Left cardiac atrium (tissue), 4 donors: ENCODE measurements at regions of chr9 and their contacts with region 1.

Region 1: DNA sequence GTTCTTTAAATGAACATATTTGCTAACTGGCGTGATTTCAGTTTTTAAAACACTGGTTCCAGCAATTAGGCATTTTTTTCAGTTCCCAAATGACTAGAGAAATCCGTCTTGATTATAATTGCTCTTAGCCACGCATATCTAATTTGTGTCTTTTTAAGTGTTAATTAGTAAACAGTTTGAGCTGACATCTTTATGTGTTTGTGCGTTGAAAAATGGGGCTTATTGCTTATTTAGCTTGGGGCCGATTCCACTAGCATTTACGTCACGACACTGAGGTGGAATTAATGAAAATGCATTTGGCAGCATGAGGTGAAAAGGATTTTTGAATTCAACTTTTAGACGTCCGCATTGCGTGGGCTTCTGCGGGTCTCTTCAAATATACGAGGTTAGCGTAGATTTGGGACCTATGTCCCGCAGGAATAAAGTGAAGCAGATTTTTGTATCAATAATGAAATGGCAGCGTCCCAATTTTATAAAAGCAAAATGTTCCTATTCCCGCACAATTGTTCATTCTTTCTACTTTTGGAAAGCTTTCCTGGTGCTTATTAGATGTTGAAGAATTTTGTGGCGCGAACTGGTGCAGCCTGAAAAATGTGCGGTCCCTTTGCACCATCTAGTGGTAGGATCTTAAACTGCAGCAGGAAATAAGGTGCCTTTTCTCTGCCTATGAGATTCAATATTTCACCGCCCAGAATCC is 122.7 kb upstream of the LMX1B start:
- DNase-seq: no peak
- ATAC-seq: peak; percentile 42 to 73

Region 2: DNA sequence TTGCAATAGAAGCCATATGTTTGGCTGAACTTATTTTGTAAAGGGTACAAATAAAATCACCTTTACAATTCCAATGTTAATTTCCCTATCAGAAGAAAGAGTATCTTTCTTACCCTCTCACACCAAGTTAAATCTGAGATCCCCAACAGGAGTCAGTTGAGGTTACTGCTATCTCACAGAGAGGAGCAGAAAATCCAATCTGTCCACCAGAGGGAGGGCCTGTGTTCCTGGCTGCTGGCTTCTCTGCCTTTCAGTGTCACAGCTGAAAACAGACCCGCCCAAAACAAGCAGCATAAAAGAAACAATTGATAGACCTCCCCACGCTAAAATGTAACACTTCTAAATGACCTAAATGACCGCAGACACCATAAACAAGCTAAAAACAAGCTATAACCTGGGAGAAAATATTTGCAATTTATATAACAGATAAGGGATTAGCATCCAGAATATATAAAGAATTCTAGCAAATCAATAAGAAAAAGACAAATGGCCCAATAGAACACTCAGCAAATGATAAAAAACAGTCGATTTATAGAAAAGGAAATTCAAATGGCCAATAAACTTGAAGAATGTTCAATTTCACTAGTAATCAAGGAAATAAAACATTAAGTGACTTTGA is 188.9 kb before region 1 on chr9:
- intact Hi-C with region 1: loop called (anchors 5 kb)
- DNase-seq: peak; percentile 55
- ATAC-seq: peak; percentile 68 to 75

Region 3: DNA sequence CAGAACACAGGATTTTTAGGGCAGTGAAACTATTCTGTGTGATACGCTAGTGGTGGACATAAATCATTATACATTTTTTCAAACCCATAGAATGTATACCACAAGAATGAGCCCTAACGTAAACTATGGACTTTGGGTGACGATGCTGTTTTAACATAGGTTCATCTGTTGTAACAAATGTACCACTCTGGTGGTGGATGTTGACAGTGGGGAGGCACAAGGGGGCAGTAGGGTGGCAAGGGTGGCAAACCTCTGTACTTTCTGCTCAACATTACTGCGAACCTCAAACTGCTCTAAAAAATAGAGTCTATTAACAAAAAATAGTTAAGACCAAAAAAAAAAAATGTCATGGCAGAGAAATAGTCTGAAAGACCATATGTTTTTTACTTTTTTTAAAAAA is 173.5 kb before region 1 on chr9:
- intact Hi-C with region 1: loop called in 1 of 2 experiments (anchors 5 kb)
- DNase-seq: no peak
- ATAC-seq: peak; percentile 27 to 43

Region 4: DNA sequence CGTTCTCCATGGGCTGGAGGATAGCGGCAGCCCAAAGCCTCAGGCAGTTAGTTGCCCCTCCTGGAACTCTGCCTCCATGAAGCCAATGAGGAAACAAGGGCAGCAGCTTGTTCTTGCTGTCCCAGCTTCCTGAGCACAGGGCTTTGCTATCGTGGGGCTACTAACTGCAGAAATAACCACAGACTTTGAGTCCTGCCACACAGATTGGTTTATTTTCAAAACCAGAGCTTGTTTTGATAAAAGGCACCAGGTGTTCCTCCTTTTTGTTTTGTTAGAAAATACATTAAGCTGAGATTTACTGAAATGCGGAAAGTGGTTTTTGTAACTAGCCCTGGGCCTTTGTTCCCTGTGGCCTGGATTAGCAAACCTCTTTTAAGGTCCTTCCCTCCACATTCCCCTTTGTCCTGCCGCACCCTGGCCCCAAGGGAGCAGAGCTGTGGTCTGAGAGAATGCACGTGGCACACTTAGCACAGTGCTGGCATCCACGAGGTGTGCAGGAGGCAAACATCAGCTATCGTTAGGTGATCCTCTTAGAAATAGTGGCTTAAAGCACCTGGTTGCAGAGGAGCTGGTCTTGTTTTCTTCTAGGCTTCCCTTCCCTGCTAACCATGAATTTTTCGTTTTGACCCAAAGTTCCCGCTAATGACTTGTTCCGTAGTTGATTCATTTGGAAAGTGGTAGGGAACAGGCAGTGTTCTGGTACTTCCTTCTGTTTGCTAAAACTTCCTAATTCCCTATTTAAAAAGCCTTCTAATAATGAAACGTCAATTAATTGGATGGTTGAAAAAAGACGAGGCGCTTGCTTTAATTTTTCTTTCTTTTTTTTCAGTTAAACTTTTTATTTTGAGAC is 142.9 kb before region 1 on chr9:
- intact Hi-C with region 1: no loop called
- DNase-seq: no peak
- ATAC-seq: peak in 1 of 2 donors; percentile 45

Region 5: DNA sequence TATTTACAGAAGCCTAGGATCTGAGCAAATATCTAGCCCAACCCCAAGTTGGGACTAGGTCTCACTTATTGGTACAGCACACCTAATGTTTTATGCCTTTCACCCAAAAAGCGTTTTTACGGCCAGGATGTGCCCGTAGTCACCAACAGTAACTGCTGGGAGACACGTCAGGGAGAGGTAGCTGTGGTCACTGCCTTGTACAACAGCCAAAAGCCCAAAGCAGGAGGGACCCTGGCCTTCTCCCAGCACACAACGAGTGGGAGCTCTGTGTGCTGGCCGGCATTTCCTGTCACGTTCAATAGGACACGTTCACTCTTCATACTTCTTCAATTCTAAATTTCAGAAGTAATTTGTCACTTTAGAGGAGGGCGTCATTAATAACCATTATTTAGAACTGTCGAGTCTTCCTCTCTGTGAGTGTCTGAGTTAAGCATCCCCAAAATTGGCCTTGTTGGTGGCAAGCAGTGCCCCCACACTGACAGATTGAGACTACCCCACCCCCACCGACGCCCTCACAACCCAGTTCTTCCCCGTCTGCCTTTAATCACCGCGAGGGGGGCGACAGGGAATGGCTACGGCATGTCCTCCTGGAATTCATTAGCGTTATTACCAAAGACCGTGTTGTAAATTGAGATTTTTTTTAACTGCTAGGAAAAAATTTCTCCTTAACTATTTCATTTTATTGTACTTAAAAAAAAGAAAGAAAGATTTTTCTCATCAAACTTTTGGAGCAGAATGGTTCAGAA is 83.7 kb before region 1 on chr9:
- intact Hi-C with region 1: loop called in 1 of 2 experiments (anchors 10 kb)
- DNase-seq: no peak
- ATAC-seq: peak; percentile 25 to 44

Region 6: GRCh38 chr9:126456441-126457174 is 34.4 kb before region 1 on chr9:
- intact Hi-C with region 1: no loop called
- DNase-seq: no peak
- ATAC-seq: peak in 1 of 2 donors; percentile 72